ENCODE measurements at regions of chr2 and their contacts with region 1.

Region 1: DNA sequence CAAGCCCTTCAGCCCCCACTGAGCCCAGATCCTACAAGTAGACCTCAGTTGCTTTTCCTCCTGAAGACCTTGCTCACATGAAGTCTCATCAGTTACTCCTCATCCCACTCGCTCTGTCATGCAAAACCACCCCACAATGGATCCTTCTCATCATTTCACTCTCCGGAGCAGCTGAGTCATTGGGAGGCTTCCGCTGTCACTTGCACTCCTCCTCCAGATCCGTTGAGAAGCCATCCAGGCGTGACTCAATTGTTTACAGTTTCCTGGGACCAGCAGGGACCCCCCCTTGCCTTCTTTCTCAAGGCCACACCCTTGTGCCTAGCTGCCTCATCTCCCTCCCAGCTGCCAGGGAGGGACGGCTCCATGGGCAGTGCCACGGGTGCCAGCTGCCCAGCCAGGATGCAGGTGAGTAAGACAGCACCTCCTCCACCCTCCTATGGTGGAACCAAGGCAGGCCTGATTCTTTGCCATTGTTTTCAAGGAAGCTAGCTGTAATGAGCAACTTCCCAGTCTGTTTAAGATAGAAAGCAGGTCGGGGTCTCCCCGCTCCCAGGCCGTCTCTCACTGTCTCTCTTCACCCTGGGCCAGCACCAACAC is 16.3 kb downstream of the GPR55 start:
- DNase-seq: peak; percentile 68 to 71
- H3K4me3 ChIP-seq: no peak overlapping the region
- H3K27ac ChIP-seq: no peak overlapping the region
- H3K4me1 ChIP-seq: peaks cover 13% of the 10 kb centered on the region
- H3K27me3 ChIP-seq: no peaks in the 10 kb centered on the region
- CTCF ChIP-seq: no peak

Region 2: DNA sequence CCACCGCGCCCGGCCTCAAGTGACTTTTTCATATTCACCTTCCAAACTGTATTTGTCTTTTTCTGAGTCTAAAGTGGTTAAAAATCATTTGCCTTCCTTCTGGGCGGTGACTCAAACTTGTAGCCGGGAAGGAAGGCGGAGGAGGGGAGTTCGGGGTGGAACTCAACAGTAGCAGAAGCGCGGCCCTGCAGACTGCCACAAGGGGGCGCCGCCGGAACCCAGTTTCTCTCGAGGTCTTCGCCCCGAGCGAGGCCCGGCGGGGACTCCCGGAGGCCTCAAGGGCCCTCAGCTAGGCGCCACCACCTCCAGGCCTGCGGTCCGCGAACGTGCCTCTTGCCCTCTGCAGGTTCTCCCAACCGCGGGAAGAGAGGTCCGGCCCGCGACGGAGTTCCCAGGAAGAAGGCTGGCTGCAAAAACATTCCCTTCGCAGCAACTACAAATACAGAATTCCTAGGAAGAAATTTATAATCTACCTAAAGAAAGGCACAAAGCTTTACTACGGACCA is 60.8 kb before region 1 on chr2:
- CTCF ChIA-PET with region 1: no interaction called
- POLR2A ChIA-PET with region 1: no interaction called
- intact Hi-C with region 1: loop called (anchors 2 kb)
- DNase-seq: peak; percentile 60 to 80
- H3K4me3 ChIP-seq: peak overlapping the region; percentile 3; the same call in 1 of the 2 replicates
- H3K27ac ChIP-seq: no peak overlapping the region
- H3K4me1 ChIP-seq: no peaks in the 10 kb centered on the region
- H3K27me3 ChIP-seq: peaks cover 13% of the 10 kb centered on the region; the same call in 1 of the 2 replicates
- CTCF ChIP-seq: peak; percentile 81

Region 3: DNA sequence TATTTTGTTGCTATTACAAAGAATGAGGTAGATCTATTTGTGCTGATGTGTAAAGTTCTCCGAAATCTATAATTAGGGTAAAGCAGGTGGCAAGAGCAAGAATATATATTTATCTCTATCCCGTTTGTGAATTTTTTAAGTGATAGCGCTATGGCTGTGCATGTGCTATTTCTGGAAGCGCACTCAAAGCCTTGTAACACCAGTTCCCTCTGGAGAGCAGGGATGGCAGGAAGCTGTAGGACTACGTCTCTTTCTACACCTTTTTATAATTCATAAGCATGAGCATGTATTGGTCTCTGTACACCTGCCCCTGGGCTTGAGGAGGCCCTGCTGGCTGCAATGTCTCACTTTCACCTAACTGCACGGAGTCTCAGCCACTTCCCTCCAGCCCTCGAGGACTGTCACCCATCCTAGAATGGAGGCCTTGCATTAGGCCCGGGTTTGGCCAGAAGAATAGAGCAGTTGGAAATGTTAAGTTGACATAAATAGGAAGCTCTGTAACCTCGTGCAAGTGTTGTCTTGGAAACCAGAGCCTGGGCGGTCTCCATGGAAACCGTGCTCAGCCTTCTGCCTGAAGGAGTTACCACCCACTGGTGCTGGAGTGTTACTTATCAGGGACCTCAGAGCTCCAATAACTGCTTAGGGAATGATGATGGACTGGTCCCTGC is 23.1 kb before region 1 on chr2:
- CTCF ChIA-PET with region 1: no interaction called
- POLR2A ChIA-PET with region 1: no interaction called
- intact Hi-C with region 1: no loop called
- DNase-seq: no peak
- H3K4me3 ChIP-seq: no peak overlapping the region
- H3K27ac ChIP-seq: no peak overlapping the region
- H3K4me1 ChIP-seq: no peaks in the 10 kb centered on the region
- H3K27me3 ChIP-seq: no peaks in the 10 kb centered on the region
- CTCF ChIP-seq: no peak

Measured in PC-9 (cell line).